ENCODE measurements at regions of chr11 and their contacts with region 1.

Region 1: GRCh38 chr11:114262681-114263512 is 33.3 kb upstream of the NNMT start:
- DNase-seq: peak; percentile 34
- ATAC-seq: peak; percentile 74
- H3K4me3 Mint-ChIP-seq: no peak overlapping the region
- H3K27ac Mint-ChIP-seq: no peak overlapping the region
- H3K4me1 Mint-ChIP-seq: no peaks in the 10 kb centered on the region
- H3K27me3 Mint-ChIP-seq: no peaks in the 10 kb centered on the region
- CTCF ChIP-seq: no peak

Region 2: DNA sequence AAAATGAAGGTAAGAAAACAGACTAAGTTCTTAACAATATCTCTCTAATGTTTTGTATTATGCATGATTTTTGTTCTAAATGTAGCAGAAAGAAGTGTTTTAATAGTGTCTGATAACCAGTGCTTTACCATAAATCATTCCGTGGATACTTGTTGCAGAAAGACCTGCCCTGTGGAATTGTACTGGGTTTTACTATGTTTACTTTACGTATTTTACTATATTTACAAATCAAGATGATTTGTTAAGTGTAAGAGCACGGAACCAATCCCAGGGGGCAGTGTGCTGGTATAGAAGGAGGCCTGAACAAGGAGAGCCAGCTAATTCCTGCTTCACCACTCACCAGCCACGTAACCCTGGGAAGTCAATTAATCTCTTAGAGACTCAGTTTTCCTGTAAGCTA is 356.9 kb before region 1 on chr11:
- CTCF ChIA-PET with region 1: interaction called, 20 read pairs
- POLR2A ChIA-PET with region 1: no interaction called
- DNase-seq: peak; percentile 42
- ATAC-seq: peak; percentile 86
- H3K4me3 Mint-ChIP-seq: no peak overlapping the region
- H3K27ac Mint-ChIP-seq: no peak overlapping the region
- H3K4me1 Mint-ChIP-seq: peaks cover 21% of the 10 kb centered on the region
- H3K27me3 Mint-ChIP-seq: no peaks in the 10 kb centered on the region
- CTCF ChIP-seq: no peak

Region 3: GRCh38 chr11:114017723-114018122 is 245.2 kb before region 1 on chr11:
- CTCF ChIA-PET with region 1: interaction called, 13 read pairs
- POLR2A ChIA-PET with region 1: no interaction called
- DNase-seq: no peak
- ATAC-seq: no peak
- H3K4me3 Mint-ChIP-seq: no peak overlapping the region
- H3K27ac Mint-ChIP-seq: no peak overlapping the region
- H3K4me1 Mint-ChIP-seq: no peaks in the 10 kb centered on the region
- H3K27me3 Mint-ChIP-seq: no peaks in the 10 kb centered on the region
- CTCF ChIP-seq: no peak

Region 4: GRCh38 chr11:114059278-114059983 is 203.5 kb before region 1 on chr11 and contains the start of gene ZBTB16:
- CTCF ChIA-PET with region 1: interaction called, 29 read pairs
- POLR2A ChIA-PET with region 1: no interaction called
- DNase-seq: peak; percentile 79
- ATAC-seq: peak; percentile 72
- H3K4me3 Mint-ChIP-seq: peak within 1 kb of the TSS; percentile 81
- H3K27ac Mint-ChIP-seq: no peak within 1 kb of the TSS
- H3K4me1 Mint-ChIP-seq: peaks cover 23% of the 10 kb centered on the region
- H3K27me3 Mint-ChIP-seq: peaks cover 100% of the 10 kb centered on the region
- CTCF ChIP-seq: no peak
- total RNA-seq, gene ZBTB16: 0.34 to 0.57 TPM (median 0.55 TPM) in 3 replicates

Region 5: GRCh38 chr11:114148013-114148382 is 114.9 kb before region 1 on chr11:
- CTCF ChIA-PET with region 1: no interaction called
- POLR2A ChIA-PET with region 1: no interaction called
- DNase-seq: no peak
- ATAC-seq: no peak
- H3K4me3 Mint-ChIP-seq: no peak overlapping the region
- H3K27ac Mint-ChIP-seq: no peak overlapping the region
- H3K4me1 Mint-ChIP-seq: peaks cover 16% of the 10 kb centered on the region
- H3K27me3 Mint-ChIP-seq: no peaks in the 10 kb centered on the region
- CTCF ChIP-seq: no peak

Region 6: DNA sequence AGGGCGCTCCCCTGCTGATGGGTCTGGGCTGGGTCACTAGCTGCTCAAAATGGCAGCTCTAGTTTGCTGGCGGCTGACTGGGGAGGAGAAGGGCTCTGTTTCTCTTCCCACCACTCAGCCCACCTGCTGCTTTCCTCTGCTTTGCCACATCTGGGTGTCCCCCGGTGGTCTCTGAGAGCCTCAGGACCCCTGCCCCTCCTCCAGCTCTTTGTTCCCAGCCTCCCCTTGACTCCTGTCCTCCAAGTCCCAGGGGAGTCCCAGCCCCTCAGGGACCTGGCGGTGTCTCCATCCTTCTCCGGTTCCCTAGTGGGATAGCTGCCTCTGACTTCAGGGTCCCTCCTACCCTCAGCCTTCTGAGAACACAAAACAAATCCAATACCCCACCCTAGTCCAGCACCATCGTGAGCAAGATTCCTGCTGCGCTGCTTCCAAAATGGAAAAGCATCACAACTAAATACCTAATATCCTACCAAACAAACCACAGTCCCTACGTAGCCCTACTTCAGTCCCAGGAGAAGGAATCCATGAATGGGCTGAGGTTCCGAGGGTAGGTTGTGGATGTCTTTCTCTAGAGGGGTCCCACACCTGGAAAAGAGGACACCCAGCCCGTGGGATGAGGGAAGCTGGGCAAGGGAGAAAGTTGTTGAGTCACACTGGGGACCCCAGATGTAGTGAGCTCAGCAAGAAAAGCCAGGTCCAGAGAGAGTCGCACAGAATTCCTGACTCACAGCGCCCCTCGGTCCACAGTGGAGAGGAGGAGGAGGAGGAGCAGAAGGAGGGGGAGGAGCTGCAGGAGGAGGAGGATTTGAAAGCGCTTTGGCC is 11.7 kb before region 1 on chr11:
- CTCF ChIA-PET with region 1: interaction called, 44 read pairs
- POLR2A ChIA-PET with region 1: no interaction called
- DNase-seq: no peak
- ATAC-seq: peak; percentile 71
- H3K4me3 Mint-ChIP-seq: no peak overlapping the region
- H3K27ac Mint-ChIP-seq: no peak overlapping the region
- H3K4me1 Mint-ChIP-seq: peaks cover 23% of the 10 kb centered on the region
- H3K27me3 Mint-ChIP-seq: no peaks in the 10 kb centered on the region; the same call in 1 of the 2 replicates
- CTCF ChIP-seq: no peak

Region 7: DNA sequence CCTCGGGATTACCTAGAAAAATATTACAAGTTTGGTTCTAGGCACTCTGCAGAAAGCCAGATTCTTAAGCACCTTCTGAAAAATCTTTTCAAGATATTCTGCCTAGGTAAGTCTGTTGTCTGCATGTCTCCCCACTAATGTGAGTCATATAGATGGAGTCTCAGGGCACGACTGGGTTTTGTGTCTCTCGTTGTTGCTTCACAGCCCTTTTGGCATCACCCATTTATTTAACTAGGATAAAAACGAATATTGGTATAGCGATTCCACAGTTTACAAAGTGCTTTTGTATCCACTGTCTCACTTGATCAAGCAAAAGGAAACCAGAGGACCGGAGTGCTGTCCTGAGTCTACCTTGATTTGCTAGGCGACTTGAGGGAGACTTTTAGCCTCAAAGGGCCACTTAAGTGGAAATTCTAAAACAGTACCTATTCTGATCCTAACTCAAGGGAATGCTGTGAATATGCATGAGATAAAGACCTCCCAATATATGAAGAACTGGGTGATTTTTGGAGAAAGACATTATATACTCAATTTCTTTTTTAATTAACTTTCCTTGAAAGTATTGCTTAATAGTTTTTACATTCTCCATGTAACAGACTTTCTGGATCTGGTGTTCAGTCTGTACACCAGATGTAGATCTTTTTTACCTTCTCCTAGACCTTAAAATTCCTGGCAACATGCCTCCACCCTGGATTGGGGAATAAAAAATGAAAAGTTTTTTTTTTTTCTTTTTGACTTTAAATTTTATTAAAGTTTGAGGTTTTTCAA is 33.9 kb after region 1 on chr11:
- CTCF ChIA-PET with region 1: no interaction called
- POLR2A ChIA-PET with region 1: no interaction called
- DNase-seq: no peak
- ATAC-seq: no peak
- H3K4me3 Mint-ChIP-seq: no peak overlapping the region
- H3K27ac Mint-ChIP-seq: no peak overlapping the region
- H3K4me1 Mint-ChIP-seq: no peaks in the 10 kb centered on the region
- H3K27me3 Mint-ChIP-seq: no peaks in the 10 kb centered on the region
- CTCF ChIP-seq: no peak

Region 8: DNA sequence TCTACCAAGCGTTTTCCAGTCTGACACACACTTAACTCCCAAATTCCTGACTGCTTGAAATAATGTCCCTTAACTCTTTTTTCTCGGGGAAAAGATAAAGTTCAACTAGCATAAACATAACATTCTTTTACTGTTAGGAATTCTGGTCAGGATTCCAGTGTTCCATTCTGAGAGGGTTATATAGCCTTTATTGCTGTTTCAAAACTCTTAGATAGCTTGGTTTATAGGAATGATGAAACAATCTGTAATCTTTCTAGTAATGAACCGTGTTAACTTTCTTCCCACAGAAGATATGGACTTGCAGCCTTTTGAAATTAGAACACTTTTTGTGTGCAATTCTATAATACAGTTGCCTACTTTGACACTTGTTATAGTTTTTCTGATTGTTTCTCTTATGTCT is 185.0 kb after region 1 on chr11:
- CTCF ChIA-PET with region 1: no interaction called
- POLR2A ChIA-PET with region 1: no interaction called
- DNase-seq: no peak
- ATAC-seq: no peak
- H3K4me3 Mint-ChIP-seq: no peak overlapping the region
- H3K27ac Mint-ChIP-seq: no peak overlapping the region; the same call in 1 of the 2 replicates
- H3K4me1 Mint-ChIP-seq: peaks cover 21% of the 10 kb centered on the region
- H3K27me3 Mint-ChIP-seq: no peaks in the 10 kb centered on the region
- CTCF ChIP-seq: no peak

Measured in WTC11 (cell line).